ENCODE measurements at regions of chr6 and their contacts with region 1.

Region 1: DNA sequence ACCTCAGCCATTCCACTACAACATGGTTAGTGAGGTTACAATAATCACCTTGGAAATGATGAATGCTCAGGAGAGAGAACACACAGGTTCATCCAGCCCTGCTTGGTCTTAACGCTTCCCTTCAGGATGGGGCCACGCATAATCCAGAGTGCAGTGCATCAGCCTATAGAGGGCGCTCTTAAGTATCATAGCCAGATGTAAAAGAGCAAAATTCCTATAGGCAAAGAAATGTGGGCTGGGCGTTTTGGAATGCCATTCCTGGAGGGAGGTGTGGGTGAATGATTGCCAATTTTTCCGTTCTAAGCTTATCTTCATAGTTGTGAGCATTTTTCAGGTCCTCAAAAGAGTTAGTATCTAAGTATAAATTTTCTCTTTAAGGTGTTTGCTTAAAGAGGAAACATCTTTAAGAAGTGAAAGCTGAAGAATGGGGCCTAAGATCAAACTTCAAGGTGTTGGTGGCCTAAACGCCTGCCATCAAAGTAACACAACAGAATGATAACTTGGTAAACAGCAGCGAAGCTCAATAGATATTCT is 1.8 kb downstream of the RIPOR2 start:
- DNase-seq: peak in 7 of 9 donors; percentile 59 to 78 (median 72)
- ATAC-seq: peak; percentile 52
- H3K4me3 ChIP-seq: peak overlapping the region; percentile 89
- H3K4me3 Mint-ChIP-seq: peak overlapping the region; percentile 89 to 100 (median 98)
- H3K27ac ChIP-seq: peak overlapping the region; percentile 85
- H3K27ac Mint-ChIP-seq: peak overlapping the region; percentile 88 to 99 (median 93)
- H3K4me1 ChIP-seq: peaks cover 37 to 44% of the 10 kb centered on the region in 2 donors
- H3K4me1 Mint-ChIP-seq: peaks cover 44 to 65% (median 50%) of the 10 kb centered on the region in 7 donors
- H3K27me3 ChIP-seq: no peaks in the 10 kb centered on the region
- H3K27me3 Mint-ChIP-seq: no peaks in the 10 kb centered on the region

Region 2: DNA sequence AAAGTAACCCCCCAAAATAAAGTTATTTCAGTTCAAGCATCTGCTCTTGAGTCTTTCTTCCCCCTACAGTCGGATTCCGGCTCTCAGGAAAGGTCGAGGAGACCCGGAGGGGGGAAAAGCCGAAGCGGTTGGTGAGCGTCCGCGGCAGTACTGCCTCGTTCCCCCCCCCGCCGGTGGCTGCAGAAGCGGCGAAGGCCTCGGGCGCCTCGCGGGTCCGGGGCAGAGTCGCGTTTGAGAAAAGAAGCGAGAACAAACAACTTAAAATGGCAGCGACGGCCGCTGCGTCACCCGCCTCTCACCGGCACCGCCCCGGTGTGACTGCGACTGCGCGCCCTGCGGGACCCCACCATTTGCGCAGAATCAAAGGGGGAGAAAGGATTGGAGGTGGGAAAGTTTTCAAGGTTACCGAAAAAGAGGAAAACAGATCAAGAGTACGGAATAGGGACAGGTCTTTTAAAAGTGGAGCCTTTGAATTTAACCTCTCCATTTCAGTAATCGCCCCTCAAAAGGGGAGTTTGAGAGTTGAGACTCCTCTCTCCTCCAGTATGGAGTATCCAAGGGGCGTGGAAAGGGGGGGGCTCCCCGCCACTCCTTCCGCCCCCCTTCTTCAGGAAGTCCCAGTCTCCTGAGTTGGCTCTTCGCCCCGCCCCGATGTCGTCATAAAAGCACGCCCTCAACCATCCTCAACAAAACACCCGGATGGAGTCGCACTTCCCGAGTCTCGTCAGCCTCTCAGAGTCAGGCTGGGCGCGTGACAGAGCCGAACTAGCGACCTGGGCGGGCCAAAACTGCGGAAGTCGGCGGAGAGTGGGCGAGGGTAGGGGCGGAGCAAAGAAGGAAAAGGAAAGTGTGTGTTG is 213.1 kb before region 1 on chr6:
- CTCF ChIA-PET with region 1: no interaction called
- POLR2A ChIA-PET with region 1: interaction called, 3 read pairs
- intact Hi-C with region 1: loop called (anchors 5 kb)
- DNase-seq: peak; percentile 97 to 100 (median 100)
- ATAC-seq: peak; percentile 90
- H3K4me3 ChIP-seq: peak overlapping the region; percentile 89
- H3K4me3 Mint-ChIP-seq: peak overlapping the region; percentile 93 to 97 (median 96)
- H3K27ac ChIP-seq: peak overlapping the region; percentile 99
- H3K27ac Mint-ChIP-seq: peak overlapping the region; percentile 95 to 100 (median 99)
- H3K4me1 ChIP-seq: peaks cover 35 to 36% of the 10 kb centered on the region in 2 donors
- H3K4me1 Mint-ChIP-seq: peaks cover 27 to 52% (median 47%) of the 10 kb centered on the region in 7 donors
- H3K27me3 ChIP-seq: no peaks in the 10 kb centered on the region
- H3K27me3 Mint-ChIP-seq: peaks cover 0 to 2% (median 0%) of the 10 kb centered on the region in 5 donors

Region 3: GRCh38 chr6:24861934-24862333 is 72.0 kb before region 1 on chr6:
- CTCF ChIA-PET with region 1: interaction called, 40 read pairs
- POLR2A ChIA-PET with region 1: interaction called, 94 read pairs
- intact Hi-C with region 1: loop called in 1 of 2 experiments (anchors 1 kb)
- DNase-seq: no peak
- ATAC-seq: no peak
- H3K4me3 ChIP-seq: no peak overlapping the region
- H3K4me3 Mint-ChIP-seq: peak overlapping the region in 9 of 10 donors; percentile 14 to 89 (median 73)
- H3K27ac ChIP-seq: peak overlapping the region; percentile 72
- H3K27ac Mint-ChIP-seq: peak overlapping the region in 8 of 9 donors; percentile 86 to 98 (median 93)
- H3K4me1 ChIP-seq: peaks cover 64 to 89% of the 10 kb centered on the region in 2 donors
- H3K4me1 Mint-ChIP-seq: peaks cover 70 to 100% (median 94%) of the 10 kb centered on the region in 7 donors
- H3K27me3 ChIP-seq: no peaks in the 10 kb centered on the region
- H3K27me3 Mint-ChIP-seq: no peaks in the 10 kb centered on the region

Region 4: DNA sequence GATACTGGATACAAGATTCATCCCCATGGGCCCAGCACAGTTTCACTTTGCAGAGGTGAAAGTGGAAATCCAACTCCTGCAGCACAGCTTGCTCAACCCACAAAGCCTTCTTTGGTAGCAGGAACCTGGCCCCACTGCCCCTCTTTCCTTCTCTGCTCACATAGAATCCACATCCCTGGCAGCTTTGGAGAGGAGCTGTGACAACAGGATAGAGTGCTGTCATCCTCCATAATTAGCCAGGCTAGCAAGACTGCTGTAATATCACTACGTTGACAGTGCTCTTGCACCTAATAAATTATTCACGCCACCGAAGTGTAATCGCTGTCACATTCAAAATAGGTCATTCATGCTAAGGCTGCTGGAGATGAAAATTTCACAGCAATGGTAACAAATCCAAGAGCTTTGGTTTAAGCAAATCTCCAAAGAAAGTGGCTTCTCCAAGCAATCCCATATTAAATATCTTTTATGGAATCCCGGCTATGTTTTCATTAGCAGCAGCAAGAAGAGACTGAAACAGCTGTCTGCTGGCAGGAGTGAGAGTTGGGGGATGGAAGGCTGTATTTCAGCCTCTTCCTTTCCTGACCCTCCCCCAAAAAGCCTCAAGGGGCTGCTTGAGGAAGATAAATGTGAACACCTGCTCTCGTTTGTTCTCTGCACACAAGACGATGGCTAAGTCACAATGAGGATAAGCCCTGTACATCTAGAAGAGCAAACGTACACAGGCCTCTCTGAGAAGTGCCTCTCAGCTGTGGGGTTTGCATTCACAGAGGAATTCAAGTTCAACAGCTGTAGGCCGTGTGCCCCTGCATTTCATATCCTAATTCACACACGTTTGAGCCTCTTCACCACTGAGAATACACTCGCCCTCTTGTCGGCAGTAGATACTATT is 14.7 kb before region 1 on chr6:
- CTCF ChIA-PET with region 1: interaction called, 14 read pairs
- POLR2A ChIA-PET with region 1: interaction called, 644 read pairs
- intact Hi-C with region 1: loop called (anchors 1 kb)
- DNase-seq: no peak
- ATAC-seq: peak; percentile 53
- H3K4me3 ChIP-seq: peak overlapping the region; percentile 24
- H3K4me3 Mint-ChIP-seq: peak overlapping the region; percentile 74 to 97 (median 86)
- H3K27ac ChIP-seq: peak overlapping the region; percentile 71
- H3K27ac Mint-ChIP-seq: peak overlapping the region; percentile 61 to 98 (median 90)
- H3K4me1 ChIP-seq: peaks cover 90% of the 10 kb centered on the region in 2 donors
- H3K4me1 Mint-ChIP-seq: peaks cover 79 to 100% (median 93%) of the 10 kb centered on the region in 7 donors
- H3K27me3 ChIP-seq: no peaks in the 10 kb centered on the region
- H3K27me3 Mint-ChIP-seq: no peaks in the 10 kb centered on the region

Region 5: DNA sequence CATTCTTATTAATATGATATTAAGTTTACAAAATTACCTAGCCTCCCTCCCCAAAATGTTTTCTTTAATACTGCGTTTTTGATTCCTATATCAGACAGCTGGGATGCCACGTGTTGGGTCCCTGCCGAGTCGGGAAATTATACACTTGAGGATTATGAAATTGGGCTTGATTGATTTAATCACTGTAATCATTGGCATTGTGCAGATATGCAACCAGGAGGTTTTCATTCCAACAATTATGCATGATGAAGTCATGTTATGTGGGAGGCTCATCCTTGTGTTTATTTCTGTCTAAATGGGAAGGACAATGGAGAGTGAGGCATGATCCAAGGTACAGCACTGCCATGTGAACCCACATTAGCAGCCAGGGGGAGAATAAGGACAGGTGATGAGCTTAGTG is 32.4 kb after region 1 on chr6:
- CTCF ChIA-PET with region 1: interaction called, 42 read pairs
- POLR2A ChIA-PET with region 1: interaction called, 1,484 read pairs
- intact Hi-C with region 1: loop called in 1 of 2 experiments (anchors 1 kb)
- DNase-seq: no peak
- ATAC-seq: no peak
- H3K4me3 ChIP-seq: no peak overlapping the region
- H3K4me3 Mint-ChIP-seq: peak overlapping the region in 1 of 10 donors; percentile 30
- H3K27ac ChIP-seq: no peak overlapping the region
- H3K27ac Mint-ChIP-seq: peak overlapping the region in 2 of 9 donors; percentile 37 to 75
- H3K4me1 ChIP-seq: peaks cover 52 to 64% of the 10 kb centered on the region in 2 donors
- H3K4me1 Mint-ChIP-seq: peaks cover 35 to 98% (median 88%) of the 10 kb centered on the region in 7 donors
- H3K27me3 ChIP-seq: no peaks in the 10 kb centered on the region
- H3K27me3 Mint-ChIP-seq: no peaks in the 10 kb centered on the region

Region 6: GRCh38 chr6:25017932-25018567 is 84.1 kb after region 1 on chr6:
- CTCF ChIA-PET with region 1: interaction called, 42 read pairs
- POLR2A ChIA-PET with region 1: interaction called, 84 read pairs
- intact Hi-C with region 1: loop called in 1 of 2 experiments (anchors 1 kb)
- DNase-seq: peak; percentile 52 to 86 (median 81)
- ATAC-seq: peak; percentile 88
- H3K4me3 ChIP-seq: no peak overlapping the region
- H3K4me3 Mint-ChIP-seq: peak overlapping the region in 9 of 10 donors; percentile 35 to 79 (median 67)
- H3K27ac ChIP-seq: peak overlapping the region; percentile 61
- H3K27ac Mint-ChIP-seq: peak overlapping the region; percentile 40 to 98 (median 94)
- H3K4me1 ChIP-seq: peaks cover 9 to 34% of the 10 kb centered on the region in 2 donors
- H3K4me1 Mint-ChIP-seq: peaks cover 25 to 48% (median 39%) of the 10 kb centered on the region in 7 donors
- H3K27me3 ChIP-seq: no peaks in the 10 kb centered on the region
- H3K27me3 Mint-ChIP-seq: no peaks in the 10 kb centered on the region

Measured in naive thymus-derived CD4-positive, alpha-beta T cell (primary cell).